ENCODE measurements at regions of chr14 and their contacts with region 1.

Region 1: DNA sequence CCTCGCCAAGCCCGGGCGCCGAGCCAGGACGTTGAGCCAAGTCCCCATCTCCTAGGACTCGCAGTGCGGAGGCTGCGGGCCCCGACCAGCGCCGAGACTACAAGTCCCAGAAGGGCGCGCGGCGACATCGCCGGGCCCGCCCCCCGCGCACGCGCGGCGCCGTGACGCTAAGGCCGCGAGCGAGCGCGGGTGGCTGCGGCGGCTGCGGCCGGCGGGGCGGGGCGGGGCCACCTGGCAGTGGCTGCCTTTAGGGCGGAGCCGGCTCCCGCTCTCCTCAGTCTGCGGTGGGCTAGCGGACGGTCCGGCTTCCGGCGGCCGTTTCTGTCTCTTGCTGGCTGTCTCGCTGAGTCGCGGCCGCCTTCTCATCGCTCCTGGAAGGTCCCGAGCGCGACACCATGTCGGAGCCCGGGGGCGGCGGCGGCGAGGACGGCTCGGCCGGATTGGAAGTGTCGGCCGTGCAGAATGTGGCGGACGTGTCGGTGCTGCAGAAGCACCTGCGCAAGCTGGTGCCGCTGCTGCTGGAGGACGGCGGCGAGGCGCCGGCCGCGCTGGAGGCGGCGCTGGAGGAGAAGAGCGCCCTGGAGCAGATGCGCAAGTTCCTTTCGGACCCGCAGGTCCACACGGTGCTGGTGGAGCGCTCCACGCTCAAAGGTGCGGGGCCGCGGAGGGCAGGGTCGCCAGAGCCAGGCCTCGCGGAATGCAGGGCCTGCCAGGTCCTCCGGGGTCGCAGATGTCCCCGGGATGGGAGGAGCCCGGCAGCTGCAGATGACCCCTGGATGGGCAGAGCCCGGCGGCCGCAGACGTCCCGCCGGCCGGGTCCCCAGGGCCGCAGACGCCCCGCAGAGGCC is at the start of gene DYNC1H1:
- DNase-seq: peak; percentile 88
- H3K4me3 Mint-ChIP-seq: peak within 1 kb of the TSS; percentile 92
- H3K27ac Mint-ChIP-seq: peak within 1 kb of the TSS; percentile 90
- H3K4me1 Mint-ChIP-seq: peaks cover 30% of the 10 kb centered on the region
- H3K27me3 Mint-ChIP-seq: no peaks in the 10 kb centered on the region
- total RNA-seq, gene DYNC1H1: 286 and 287 TPM in 2 replicates

Region 2: GRCh38 chr14:101707068-101707842 is 257.3 kb before region 1 on chr14:
- intact Hi-C with region 1: loop called (anchors 1 kb)
- DNase-seq: peak; percentile 55
- H3K4me3 Mint-ChIP-seq: no peak overlapping the region
- H3K27ac Mint-ChIP-seq: peak overlapping the region; percentile 18
- H3K4me1 Mint-ChIP-seq: peaks cover 22% of the 10 kb centered on the region
- H3K27me3 Mint-ChIP-seq: peaks cover 21% of the 10 kb centered on the region

Region 3: GRCh38 chr14:101947906-101948665 is 16.4 kb before region 1 on chr14:
- intact Hi-C with region 1: loop called (anchors 1 kb)
- DNase-seq: peak; percentile 100
- H3K4me3 Mint-ChIP-seq: peak overlapping the region; percentile 95
- H3K27ac Mint-ChIP-seq: peak overlapping the region; percentile 97
- H3K4me1 Mint-ChIP-seq: peaks cover 11% of the 10 kb centered on the region
- H3K27me3 Mint-ChIP-seq: peaks cover 15% of the 10 kb centered on the region

Region 4: GRCh38 chr14:101997429-101998336 is 33.2 kb after region 1 on chr14:
- intact Hi-C with region 1: no loop called
- DNase-seq: no peak
- H3K4me3 Mint-ChIP-seq: no peak overlapping the region
- H3K27ac Mint-ChIP-seq: no peak overlapping the region
- H3K4me1 Mint-ChIP-seq: no peaks in the 10 kb centered on the region
- H3K27me3 Mint-ChIP-seq: no peaks in the 10 kb centered on the region

Region 5: GRCh38 chr14:102008891-102009290 is 44.4 kb after region 1 on chr14:
- intact Hi-C with region 1: no loop called
- DNase-seq: no peak
- H3K4me3 Mint-ChIP-seq: no peak overlapping the region
- H3K27ac Mint-ChIP-seq: no peak overlapping the region
- H3K4me1 Mint-ChIP-seq: no peaks in the 10 kb centered on the region
- H3K27me3 Mint-ChIP-seq: no peaks in the 10 kb centered on the region

Region 6: DNA sequence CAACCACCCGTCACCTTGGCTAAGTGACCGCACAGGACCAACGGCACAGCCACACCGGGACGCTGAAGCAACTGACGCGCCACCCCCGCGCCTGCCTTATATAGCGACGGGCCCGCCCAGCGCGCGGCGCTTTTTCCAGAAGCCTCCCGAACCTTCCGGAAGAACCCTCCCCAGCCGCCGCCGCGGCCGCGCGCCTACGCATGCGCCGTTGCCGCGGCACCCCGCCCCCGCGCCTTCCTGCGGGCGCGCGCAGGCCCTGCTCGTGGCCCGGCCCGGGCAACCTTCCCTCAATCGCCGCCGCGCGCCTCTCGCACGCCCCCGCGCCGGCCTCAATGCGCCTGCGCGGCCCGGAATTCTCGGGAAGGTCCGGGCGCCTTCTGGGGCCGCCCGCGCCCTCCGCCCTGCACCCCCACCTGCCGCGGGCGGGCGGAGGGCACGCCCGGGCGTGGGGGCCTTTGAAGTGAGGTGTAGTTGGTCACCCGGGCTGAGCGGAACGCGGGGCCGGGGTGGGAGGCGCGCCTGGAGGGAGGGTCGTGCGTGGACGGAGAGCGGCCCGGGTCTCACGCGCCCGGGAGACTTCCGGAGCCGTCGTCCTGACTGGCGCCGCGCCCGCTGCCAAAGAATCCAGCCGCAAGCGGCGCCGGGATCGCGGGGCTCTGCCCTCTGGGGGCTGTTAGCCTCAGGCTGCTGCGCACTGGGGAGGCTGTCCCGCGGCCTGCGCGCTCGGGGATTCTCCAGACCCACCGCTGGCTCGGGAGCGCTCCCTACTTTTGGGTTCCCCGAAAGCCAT is 122.6 kb after region 1 on chr14 and contains the start of gene HSP90AA1:
- intact Hi-C with region 1: loop called (anchors 2 kb)
- DNase-seq: peak; percentile 94
- H3K4me3 Mint-ChIP-seq: peak within 1 kb of the TSS; percentile 90
- H3K27ac Mint-ChIP-seq: peak within 1 kb of the TSS; percentile 93
- H3K4me1 Mint-ChIP-seq: peaks cover 49% of the 10 kb centered on the region
- H3K27me3 Mint-ChIP-seq: no peaks in the 10 kb centered on the region
- total RNA-seq, gene HSP90AA1: 995 and 1,017 TPM in 2 replicates

Region 7: DNA sequence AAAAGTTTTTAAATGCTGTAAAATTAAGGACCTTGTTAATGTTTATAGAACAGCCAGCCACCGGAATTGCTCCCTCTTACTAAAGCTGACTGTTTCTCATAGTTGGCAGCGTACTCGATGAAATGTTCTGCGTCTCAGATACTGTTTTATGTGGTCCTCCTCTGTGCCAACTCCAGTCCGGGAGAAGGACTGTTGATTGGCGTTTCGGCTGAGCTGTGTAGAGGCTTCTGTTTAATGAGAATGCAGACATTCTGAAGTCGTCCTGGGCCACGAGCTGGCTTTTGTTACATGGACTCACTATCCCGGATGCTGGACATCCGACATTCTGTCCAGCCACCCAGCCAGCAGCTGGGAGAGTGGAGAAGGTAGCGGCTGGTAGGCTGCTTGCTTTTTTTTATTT is 250.6 kb after region 1 on chr14:
- intact Hi-C with region 1: no loop called
- DNase-seq: no peak
- H3K4me3 Mint-ChIP-seq: no peak overlapping the region
- H3K27ac Mint-ChIP-seq: no peak overlapping the region
- H3K4me1 Mint-ChIP-seq: peaks cover 1% of the 10 kb centered on the region
- H3K27me3 Mint-ChIP-seq: no peaks in the 10 kb centered on the region

Region 8: GRCh38 chr14:102509744-102510615 is 545.5 kb after region 1 on chr14 and contains the start of gene ANKRD9:
- intact Hi-C with region 1: loop called (anchors 5 kb)
- DNase-seq: peak; percentile 87
- H3K4me3 Mint-ChIP-seq: peak within 1 kb of the TSS; percentile 81
- H3K27ac Mint-ChIP-seq: peak within 1 kb of the TSS; percentile 52
- H3K4me1 Mint-ChIP-seq: peaks cover 12% of the 10 kb centered on the region
- H3K27me3 Mint-ChIP-seq: no peaks in the 10 kb centered on the region
- total RNA-seq, gene ANKRD9: 16.9 and 17.0 TPM in 2 replicates